ENCODE measurements at regions of chr4 and their contacts with region 1.

Region 1: GRCh38 chr4:162586266-162586665 is 422.5 kb upstream of the FSTL5 start:
- DNase-seq: no peak
- H3K4me3 ChIP-seq: no peak overlapping the region
- H3K27ac ChIP-seq: no peak overlapping the region
- H3K4me1 ChIP-seq: no peaks in the 10 kb centered on the region
- H3K27me3 ChIP-seq: no peaks in the 10 kb centered on the region
- CTCF ChIP-seq: no peak
- EP300 ChIP-seq: no peak
- POLR2A ChIP-seq: no peak

Region 2: DNA sequence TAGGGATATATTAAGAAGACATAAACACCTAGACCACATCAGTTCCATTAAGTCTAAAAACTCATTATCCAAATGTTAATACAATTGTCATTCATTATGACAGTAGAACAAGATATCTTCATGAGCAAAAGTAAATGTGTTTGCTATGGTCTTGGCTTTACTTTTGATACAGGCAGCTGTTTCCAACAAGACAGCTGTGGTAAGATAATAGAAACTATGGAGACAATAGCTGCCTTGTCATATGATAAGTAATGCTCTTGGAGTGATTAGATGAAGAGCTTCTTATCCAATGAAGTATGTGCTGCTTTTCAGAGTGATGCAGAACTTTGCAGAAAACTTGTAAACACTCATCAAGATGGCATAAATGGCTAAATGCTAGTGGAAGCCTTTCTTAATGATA is 1488.4 kb before region 1 on chr4:
- intact Hi-C with region 1: loop called in 1 of 4 experiments (anchors 5 kb)
- DNase-seq: no peak
- H3K4me3 ChIP-seq: no peak overlapping the region
- H3K27ac ChIP-seq: no peak overlapping the region
- H3K4me1 ChIP-seq: no peaks in the 10 kb centered on the region
- H3K27me3 ChIP-seq: no peaks in the 10 kb centered on the region
- CTCF ChIP-seq: no peak
- EP300 ChIP-seq: no peak
- POLR2A ChIP-seq: no peak

Region 3: GRCh38 chr4:162909952-162910351 is 323.7 kb after region 1 on chr4:
- intact Hi-C with region 1: no loop called
- DNase-seq: no peak
- H3K4me3 ChIP-seq: no peak overlapping the region
- H3K27ac ChIP-seq: no peak overlapping the region
- H3K4me1 ChIP-seq: no peaks in the 10 kb centered on the region
- H3K27me3 ChIP-seq: no peaks in the 10 kb centered on the region
- CTCF ChIP-seq: no peak
- EP300 ChIP-seq: no peak
- POLR2A ChIP-seq: no peak

Measured in ovary (tissue), 10 donors.